ENCODE measurements at regions of chr5 and their contacts with region 1.

Region 1: DNA sequence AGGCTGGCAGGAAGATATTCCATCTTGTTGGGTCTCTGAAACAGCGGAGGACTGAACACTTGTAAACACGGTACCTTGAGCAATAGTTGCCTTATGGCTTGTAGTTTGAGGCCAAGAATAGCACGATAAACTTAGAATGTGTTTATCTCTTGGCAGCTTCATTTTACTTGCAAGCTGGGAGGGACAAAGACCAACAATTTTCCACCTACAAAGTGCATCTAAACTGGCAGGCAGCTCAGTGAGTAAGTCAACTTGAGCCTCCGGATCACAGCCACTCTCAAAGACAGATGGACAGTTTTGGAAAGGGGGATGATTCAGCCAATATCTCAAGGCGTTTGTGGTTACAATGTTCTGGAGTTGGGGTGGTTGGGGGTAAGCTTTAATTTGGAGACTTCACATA is 652.6 kb downstream of the CETN3 start:
- DNase-seq: no peak
- ATAC-seq: no peak
- H3K4me3 ChIP-seq: no peak overlapping the region
- H3K27ac ChIP-seq: no peak overlapping the region
- H3K4me1 ChIP-seq: no peaks in the 10 kb centered on the region
- H3K27me3 ChIP-seq: no peaks in the 10 kb centered on the region
- CTCF ChIP-seq: no peak
- EP300 ChIP-seq: no peak
- POLR2A ChIP-seq: no peak
- RAD21 ChIP-seq: no peak

Region 2: GRCh38 chr5:89676634-89677033 is 80.3 kb before region 1 on chr5:
- CTCF ChIA-PET with region 1: no interaction called
- POLR2A ChIA-PET with region 1: no interaction called
- RAD21 ChIA-PET with region 1: no interaction called
- SMC1A ChIA-PET with region 1: no interaction called
- in situ Hi-C with region 1: no loop called
- intact Hi-C with region 1: no loop called
- DNase-seq: no peak
- ATAC-seq: no peak
- H3K4me3 ChIP-seq: no peak overlapping the region
- H3K27ac ChIP-seq: no peak overlapping the region
- H3K4me1 ChIP-seq: no peaks in the 10 kb centered on the region
- H3K27me3 ChIP-seq: no peaks in the 10 kb centered on the region
- CTCF ChIP-seq: no peak
- EP300 ChIP-seq: no peak
- POLR2A ChIP-seq: no peak
- RAD21 ChIP-seq: no peak

Region 3: GRCh38 chr5:89769975-89770374 is 13.0 kb after region 1 on chr5:
- CTCF ChIA-PET with region 1: no interaction called
- POLR2A ChIA-PET with region 1: no interaction called
- RAD21 ChIA-PET with region 1: no interaction called
- SMC1A ChIA-PET with region 1: no interaction called
- in situ Hi-C with region 1: no loop called
- intact Hi-C with region 1: no loop called
- DNase-seq: no peak
- ATAC-seq: no peak
- H3K4me3 ChIP-seq: no peak overlapping the region
- H3K27ac ChIP-seq: no peak overlapping the region
- H3K4me1 ChIP-seq: no peaks in the 10 kb centered on the region
- H3K27me3 ChIP-seq: no peaks in the 10 kb centered on the region
- CTCF ChIP-seq: no peak
- EP300 ChIP-seq: no peak
- POLR2A ChIP-seq: no peak
- RAD21 ChIP-seq: no peak

Region 4: DNA sequence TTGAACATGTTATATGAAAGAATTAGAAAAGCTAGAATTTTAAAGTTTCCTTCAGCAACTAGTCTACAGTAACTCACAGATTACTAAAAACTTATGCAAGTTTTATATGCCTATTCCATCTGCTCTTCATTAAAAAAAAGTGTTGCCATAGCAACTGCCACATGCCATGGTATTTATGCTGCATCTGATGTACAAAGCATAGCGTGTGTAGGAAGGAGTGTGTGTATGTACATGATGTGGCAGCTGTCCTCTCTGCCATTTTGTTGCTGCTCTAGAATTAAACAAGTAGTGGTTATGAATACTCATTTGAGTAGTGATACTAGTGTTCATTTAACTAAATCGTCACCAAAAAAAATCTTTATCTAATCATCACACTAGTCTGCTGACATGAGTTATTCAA is 59.1 kb after region 1 on chr5:
- CTCF ChIA-PET with region 1: no interaction called
- POLR2A ChIA-PET with region 1: no interaction called
- RAD21 ChIA-PET with region 1: no interaction called
- SMC1A ChIA-PET with region 1: no interaction called
- in situ Hi-C with region 1: no loop called
- intact Hi-C with region 1: loop called (anchors 10 kb)
- DNase-seq: no peak
- ATAC-seq: no peak
- H3K4me3 ChIP-seq: no peak overlapping the region
- H3K27ac ChIP-seq: no peak overlapping the region
- H3K4me1 ChIP-seq: no peaks in the 10 kb centered on the region
- H3K27me3 ChIP-seq: no peaks in the 10 kb centered on the region
- CTCF ChIP-seq: no peak
- EP300 ChIP-seq: no peak
- POLR2A ChIP-seq: no peak
- RAD21 ChIP-seq: no peak